OCI-LY7 (cell line): ENCODE measurements at regions of chr3 and their contacts with region 1.

Region 1: DNA sequence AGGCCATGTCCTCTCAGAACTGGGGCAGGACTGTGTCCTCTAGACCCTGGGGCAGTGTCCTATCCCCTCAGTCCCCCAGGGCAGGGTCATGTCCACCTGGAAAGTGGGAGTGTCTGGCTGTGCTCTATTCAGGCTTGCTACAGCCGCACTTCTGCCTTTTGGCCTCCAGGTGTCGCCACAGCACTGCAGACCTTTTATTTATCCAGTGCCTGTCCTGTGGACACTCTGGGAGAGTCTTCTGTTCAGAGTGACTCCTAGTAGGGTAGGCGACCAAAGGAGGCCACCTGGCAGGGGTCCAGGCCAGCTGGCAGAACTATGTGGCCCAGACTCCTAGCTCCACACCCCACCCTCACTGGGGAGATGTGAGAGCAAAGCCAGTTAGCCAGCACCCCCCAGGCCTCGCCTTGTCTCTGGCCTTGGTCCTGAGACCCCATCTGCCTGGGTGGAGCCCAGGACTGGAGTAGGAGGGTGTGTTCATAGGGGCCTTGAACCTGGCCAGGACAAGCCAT is 3.9 kb downstream of the TMIE start:
- DNase-seq: peak; percentile 65
- H3K4me3 ChIP-seq: no peak overlapping the region
- H3K27ac ChIP-seq: no peak overlapping the region
- H3K4me1 ChIP-seq: no peaks in the 10 kb centered on the region
- CTCF ChIP-seq: peak; percentile 92

Region 2: GRCh38 chr3:46472736-46473135 is 232.3 kb before region 1 on chr3:
- CTCF ChIA-PET with region 1: interaction called, 10 read pairs
- POLR2A ChIA-PET with region 1: no interaction called
- intact Hi-C with region 1: no loop called
- DNase-seq: no peak
- H3K4me3 ChIP-seq: no peak overlapping the region
- H3K27ac ChIP-seq: no peak overlapping the region
- H3K4me1 ChIP-seq: no peaks in the 10 kb centered on the region
- CTCF ChIP-seq: no peak

Region 3: GRCh38 chr3:46524008-46524407 is 181.1 kb before region 1 on chr3:
- CTCF ChIA-PET with region 1: no interaction called
- POLR2A ChIA-PET with region 1: no interaction called
- intact Hi-C with region 1: no loop called
- DNase-seq: no peak
- H3K4me3 ChIP-seq: no peak overlapping the region
- H3K27ac ChIP-seq: no peak overlapping the region
- H3K4me1 ChIP-seq: peaks cover 12% of the 10 kb centered on the region
- CTCF ChIP-seq: no peak

Region 4: GRCh38 chr3:46558184-46559043 is 146.7 kb before region 1 on chr3:
- CTCF ChIA-PET with region 1: no interaction called
- POLR2A ChIA-PET with region 1: no interaction called
- intact Hi-C with region 1: no loop called
- DNase-seq: peak; percentile 88
- H3K4me3 ChIP-seq: no peak overlapping the region
- H3K27ac ChIP-seq: peak overlapping the region; percentile 32
- H3K4me1 ChIP-seq: peaks cover 23% of the 10 kb centered on the region
- CTCF ChIP-seq: peak; percentile 98

Region 5: GRCh38 chr3:46742992-46743585 is 38.0 kb after region 1 on chr3:
- CTCF ChIA-PET with region 1: no interaction called
- POLR2A ChIA-PET with region 1: no interaction called
- intact Hi-C with region 1: no loop called
- DNase-seq: no peak
- H3K4me3 ChIP-seq: no peak overlapping the region
- H3K27ac ChIP-seq: no peak overlapping the region
- H3K4me1 ChIP-seq: no peaks in the 10 kb centered on the region
- CTCF ChIP-seq: no peak

Region 6: GRCh38 chr3:46768061-46768460 is 63.0 kb after region 1 on chr3:
- CTCF ChIA-PET with region 1: no interaction called
- POLR2A ChIA-PET with region 1: no interaction called
- intact Hi-C with region 1: no loop called
- DNase-seq: no peak
- H3K4me3 ChIP-seq: no peak overlapping the region
- H3K27ac ChIP-seq: no peak overlapping the region
- H3K4me1 ChIP-seq: no peaks in the 10 kb centered on the region
- CTCF ChIP-seq: no peak

Region 7: DNA sequence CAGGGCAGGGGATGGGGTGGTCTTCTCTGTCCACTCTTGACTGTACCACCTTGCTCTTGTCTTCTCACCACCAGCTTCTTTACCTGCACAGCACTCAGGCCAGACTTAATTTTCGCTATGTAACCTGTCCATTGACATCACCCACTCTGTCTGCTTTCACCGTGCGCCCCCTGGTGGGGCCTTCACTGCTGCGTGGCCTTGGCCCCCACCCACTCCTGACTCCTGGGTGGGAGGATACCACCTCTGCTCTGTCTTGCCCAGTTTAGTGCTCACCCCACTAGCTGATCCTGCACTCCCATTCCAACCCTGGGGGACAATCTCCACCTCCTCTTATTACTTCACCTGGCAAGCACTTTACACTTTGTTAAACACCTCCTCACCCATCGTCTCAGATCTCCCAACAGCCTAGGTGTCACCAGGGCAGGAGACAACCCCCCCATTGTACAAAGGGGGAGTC is 190.2 kb after region 1 on chr3:
- CTCF ChIA-PET with region 1: no interaction called
- POLR2A ChIA-PET with region 1: no interaction called
- intact Hi-C with region 1: loop called (anchors 1 kb)
- DNase-seq: peak; percentile 74
- H3K4me3 ChIP-seq: no peak overlapping the region
- H3K27ac ChIP-seq: no peak overlapping the region
- H3K4me1 ChIP-seq: no peaks in the 10 kb centered on the region
- CTCF ChIP-seq: peak; percentile 98

Region 8: GRCh38 chr3:47009225-47010110 is 304.4 kb after region 1 on chr3:
- CTCF ChIA-PET with region 1: no interaction called
- POLR2A ChIA-PET with region 1: no interaction called
- intact Hi-C with region 1: loop called (anchors 10 kb)
- DNase-seq: peak; percentile 53
- H3K4me3 ChIP-seq: no peak overlapping the region
- H3K27ac ChIP-seq: no peak overlapping the region
- H3K4me1 ChIP-seq: peaks cover 11% of the 10 kb centered on the region
- CTCF ChIP-seq: no peak

Region 9: GRCh38 chr3:47370887-47371697 is 666.0 kb after region 1 on chr3:
- CTCF ChIA-PET with region 1: no interaction called
- POLR2A ChIA-PET with region 1: no interaction called
- intact Hi-C with region 1: loop called (anchors 10 kb)
- DNase-seq: peak; percentile 54
- H3K4me3 ChIP-seq: no peak overlapping the region
- H3K27ac ChIP-seq: no peak overlapping the region
- H3K4me1 ChIP-seq: no peaks in the 10 kb centered on the region
- CTCF ChIP-seq: peak; percentile 57